Dendritic cell treated with granulocyte-macrophage colony-stimulating factor and Interleukin-4, amounts not matched to agents 40 ng/mL and 50 ng/mL, for 4 days (primary cell): ENCODE measurements at regions of chr18 and their contacts with region 1.

Region 1: GRCh38 chr18:23452728-23453679 is at the start of gene RIOK3:
- H3K4me3 Mint-ChIP-seq: peak within 1 kb of the TSS; percentile 100
- H3K27ac Mint-ChIP-seq: peak within 1 kb of the TSS; percentile 99
- H3K4me1 Mint-ChIP-seq: peaks cover 43% of the 10 kb centered on the region
- H3K27me3 Mint-ChIP-seq: no peaks in the 10 kb centered on the region

Region 2: GRCh38 chr18:23231340-23232021 is 221.5 kb before region 1 on chr18:
- intact Hi-C with region 1: loop called (anchors 10 kb)
- H3K4me3 Mint-ChIP-seq: peak overlapping the region; percentile 51
- H3K27ac Mint-ChIP-seq: peak overlapping the region; percentile 84
- H3K4me1 Mint-ChIP-seq: peaks cover 35% of the 10 kb centered on the region
- H3K27me3 Mint-ChIP-seq: peaks cover 19% of the 10 kb centered on the region

Region 3: GRCh38 chr18:23437357-23438045 is 15.5 kb before region 1 on chr18:
- intact Hi-C with region 1: loop called (anchors 2 kb)
- H3K4me3 Mint-ChIP-seq: peak overlapping the region; percentile 91
- H3K27ac Mint-ChIP-seq: peak overlapping the region; percentile 81
- H3K4me1 Mint-ChIP-seq: peaks cover 16% of the 10 kb centered on the region
- H3K27me3 Mint-ChIP-seq: no peaks in the 10 kb centered on the region

Region 4: DNA sequence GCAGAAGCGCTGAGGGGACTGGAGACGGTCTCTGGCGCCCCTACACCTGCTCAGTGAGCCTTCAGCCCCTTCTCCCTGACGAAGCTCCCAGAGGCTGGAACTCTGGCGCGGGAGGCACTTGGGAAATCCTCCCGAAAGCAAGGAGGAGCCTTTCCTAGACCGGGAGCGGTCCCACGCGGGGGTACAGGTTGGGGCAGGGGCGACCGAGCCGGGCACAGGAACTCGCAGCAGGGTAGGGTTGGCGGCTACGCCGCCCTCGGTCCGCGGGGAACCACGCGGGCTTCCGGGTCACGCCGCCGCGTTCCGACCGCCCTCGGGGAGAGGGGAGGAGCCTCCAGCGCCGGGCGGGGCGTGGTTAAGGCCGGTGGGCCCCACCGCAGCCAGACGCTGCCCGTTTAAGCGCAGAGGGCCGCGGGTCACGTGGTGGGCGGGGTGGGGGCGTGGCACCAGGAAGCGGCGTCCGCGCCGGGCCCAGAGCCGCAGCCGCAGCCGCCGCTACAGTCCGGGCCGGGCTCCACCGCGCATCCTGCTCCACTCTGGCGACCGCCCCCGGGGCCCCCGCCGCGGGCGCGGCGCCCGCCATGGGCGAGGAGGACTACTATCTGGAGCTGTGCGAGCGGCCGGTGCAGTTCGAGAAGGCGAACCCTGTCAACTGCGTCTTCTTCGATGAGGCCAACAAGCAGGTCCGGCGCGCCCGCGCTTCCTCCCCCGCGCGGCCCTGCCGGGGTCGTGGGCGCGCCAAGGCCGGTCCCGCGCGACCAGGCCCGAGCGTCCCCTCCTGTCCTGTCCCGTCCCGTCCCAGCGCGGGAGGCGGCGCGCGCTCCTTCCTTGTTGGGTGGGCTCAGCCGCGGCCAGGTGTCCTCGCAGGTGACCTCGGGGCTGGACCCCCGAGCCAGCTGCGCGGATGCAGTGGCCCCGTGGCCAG is 50.3 kb after region 1 on chr18 and contains the start of gene RMC1:
- intact Hi-C with region 1: loop called (anchors 1 kb)
- H3K4me3 Mint-ChIP-seq: peak within 1 kb of the TSS; percentile 93
- H3K27ac Mint-ChIP-seq: peak within 1 kb of the TSS; percentile 97
- H3K4me1 Mint-ChIP-seq: peaks cover 46% of the 10 kb centered on the region
- H3K27me3 Mint-ChIP-seq: no peaks in the 10 kb centered on the region

Region 5: DNA sequence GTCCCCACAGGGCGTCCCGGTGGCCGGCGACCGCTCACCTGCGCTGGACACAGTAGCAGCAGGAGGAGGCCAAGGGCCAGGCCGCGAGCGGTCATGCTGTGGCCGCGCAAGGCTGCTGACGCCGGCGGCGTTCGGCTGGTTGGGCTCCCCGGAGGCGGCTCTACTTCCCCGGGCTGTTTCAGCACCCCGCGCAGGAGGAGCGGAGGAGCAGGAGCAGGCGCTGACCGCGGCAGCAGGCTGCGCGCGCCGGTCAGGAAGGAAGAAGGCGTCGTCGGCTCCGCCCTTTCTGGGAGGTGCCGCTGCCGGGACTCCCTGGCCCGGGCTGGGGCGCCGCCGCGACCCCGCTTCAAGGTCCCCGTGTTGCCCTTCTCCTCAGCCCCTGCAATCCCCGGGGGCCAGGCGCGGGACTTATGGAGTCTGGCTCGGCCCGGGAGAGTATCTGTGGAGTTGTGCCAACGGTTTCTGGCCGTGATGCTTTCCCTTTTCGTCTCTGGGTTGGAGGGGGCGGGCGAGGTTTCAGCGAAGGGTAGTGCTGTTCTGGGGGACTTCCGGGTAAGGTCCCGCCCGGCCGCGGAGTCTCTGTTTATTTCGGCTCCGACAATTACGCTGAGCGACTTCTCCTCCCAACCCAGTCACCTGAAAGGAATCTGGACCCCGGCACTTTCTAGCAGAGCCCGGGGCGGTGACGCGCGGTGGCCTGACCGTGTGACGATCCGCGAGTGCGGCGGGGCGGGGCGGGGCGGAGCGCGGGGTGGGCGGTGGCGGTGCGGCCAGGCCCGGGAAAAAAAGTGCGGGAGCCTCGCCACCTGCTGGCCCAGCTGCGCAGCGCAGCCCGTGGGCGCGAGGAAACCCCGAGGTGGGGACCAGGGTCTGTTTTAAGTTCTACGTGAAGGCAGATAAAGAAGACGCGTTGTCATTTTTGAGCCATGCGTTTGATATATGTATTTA is 133.5 kb after region 1 on chr18 and contains the start of gene NPC1:
- intact Hi-C with region 1: loop called (anchors 2 kb)
- H3K4me3 Mint-ChIP-seq: peak within 1 kb of the TSS; percentile 89
- H3K27ac Mint-ChIP-seq: peak within 1 kb of the TSS; percentile 96
- H3K4me1 Mint-ChIP-seq: peaks cover 47% of the 10 kb centered on the region
- H3K27me3 Mint-ChIP-seq: peaks cover 11% of the 10 kb centered on the region